WTC11 (cell line): ENCODE measurements at regions of chr22 and their contacts with region 1.

Region 1: DNA sequence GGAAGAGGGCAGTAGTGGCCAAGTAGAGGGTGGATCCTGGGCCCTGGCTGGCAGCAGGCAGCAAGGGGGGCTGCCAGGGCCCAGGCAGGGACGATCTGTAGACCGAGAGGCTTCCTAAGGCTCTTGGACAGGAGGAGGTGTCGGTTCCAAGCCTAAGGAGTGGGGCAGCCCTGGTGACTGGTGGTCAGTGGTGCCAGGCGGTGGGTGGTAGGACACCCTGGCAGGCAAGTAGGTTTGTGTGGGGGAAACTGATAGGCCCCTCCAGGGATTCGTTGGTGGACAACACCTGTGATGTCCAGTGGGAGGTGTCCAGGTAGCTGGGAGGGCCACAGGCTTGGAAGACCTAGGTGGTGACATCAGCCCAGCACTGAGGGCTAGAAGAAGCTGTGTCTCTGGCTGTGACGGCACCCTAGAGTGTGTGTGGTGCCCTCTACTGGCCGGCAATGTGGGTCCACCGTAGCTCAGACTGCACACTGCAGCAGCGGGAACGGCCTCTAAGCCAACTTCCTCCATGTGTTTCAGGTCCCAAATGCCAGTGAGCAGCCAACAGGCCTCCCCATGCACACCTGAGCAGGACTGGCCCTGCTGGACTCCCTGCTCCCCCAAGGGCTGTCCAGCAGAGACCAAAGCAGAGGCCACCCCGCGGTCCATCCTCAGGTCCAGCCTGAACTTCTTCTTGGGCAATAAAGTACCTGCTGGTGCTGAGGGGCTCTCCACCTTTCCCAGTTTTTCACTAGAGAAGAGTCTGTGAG is 9.4 kb upstream of the SAMM50 start:
- DNase-seq: peak; percentile 75
- ATAC-seq: peak; percentile 95
- H3K4me3 Mint-ChIP-seq: no peak overlapping the region
- H3K27ac Mint-ChIP-seq: no peak overlapping the region
- H3K4me1 Mint-ChIP-seq: no peaks in the 10 kb centered on the region
- H3K27me3 Mint-ChIP-seq: no peaks in the 10 kb centered on the region
- CTCF ChIP-seq: peak; percentile 57

Region 2: GRCh38 chr22:43488031-43488866 is 457.6 kb before region 1 on chr22:
- CTCF ChIA-PET with region 1: no interaction called
- POLR2A ChIA-PET with region 1: no interaction called
- DNase-seq: no peak
- ATAC-seq: no peak
- H3K4me3 Mint-ChIP-seq: no peak overlapping the region
- H3K27ac Mint-ChIP-seq: no peak overlapping the region
- H3K4me1 Mint-ChIP-seq: no peaks in the 10 kb centered on the region
- H3K27me3 Mint-ChIP-seq: no peaks in the 10 kb centered on the region; the same call in 1 of the 2 replicates
- CTCF ChIP-seq: no peak

Region 3: GRCh38 chr22:43923631-43924464 is 22.0 kb before region 1 on chr22 and contains the start of gene PNPLA3:
- CTCF ChIA-PET with region 1: interaction called, 65 read pairs
- POLR2A ChIA-PET with region 1: interaction called, 5 read pairs
- DNase-seq: peak; percentile 98
- ATAC-seq: peak; percentile 86
- H3K4me3 Mint-ChIP-seq: peak within 1 kb of the TSS; percentile 84
- H3K27ac Mint-ChIP-seq: peak within 1 kb of the TSS; percentile 79
- H3K4me1 Mint-ChIP-seq: peaks cover 26% of the 10 kb centered on the region
- H3K27me3 Mint-ChIP-seq: no peaks in the 10 kb centered on the region; the same call in 1 of the 2 replicates
- CTCF ChIP-seq: no peak
- total RNA-seq, gene PNPLA3: 17.9 to 19.8 TPM (median 19.6 TPM) in 3 replicates

Region 4: DNA sequence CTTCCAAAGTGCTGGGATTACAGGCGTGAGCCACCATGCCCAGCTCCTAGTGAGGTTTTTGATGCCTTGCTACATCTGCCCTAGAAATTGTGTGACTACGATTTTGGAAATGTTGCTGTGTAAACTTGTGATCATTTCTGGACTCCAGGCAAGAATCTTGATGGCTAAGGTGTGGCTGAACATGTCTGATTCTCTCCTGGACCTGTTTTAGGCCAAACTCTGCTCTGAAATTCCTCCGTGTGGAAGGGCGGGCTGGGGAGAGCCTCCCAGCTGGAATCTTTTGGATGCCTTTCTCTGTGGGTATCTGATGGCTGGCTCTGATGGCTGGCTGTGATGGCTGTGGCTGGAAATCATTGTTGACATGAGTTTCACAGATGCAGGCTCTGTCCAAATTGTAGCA is 14.0 kb before region 1 on chr22:
- CTCF ChIA-PET with region 1: interaction called, 65 read pairs
- POLR2A ChIA-PET with region 1: no interaction called
- DNase-seq: no peak
- ATAC-seq: no peak
- H3K4me3 Mint-ChIP-seq: no peak overlapping the region
- H3K27ac Mint-ChIP-seq: no peak overlapping the region
- H3K4me1 Mint-ChIP-seq: no peaks in the 10 kb centered on the region
- H3K27me3 Mint-ChIP-seq: no peaks in the 10 kb centered on the region
- CTCF ChIP-seq: no peak